Esophagus muscularis mucosa (tissue), 4 donors: ENCODE measurements at regions of chr10 and their contacts with region 1.

Region 1: GRCh38 chr10:92290837-92291615 is at the starts of genes CPEB3 and MARCHF5:
- DNase-seq: peak; percentile 98
- H3K4me3 ChIP-seq: peak within 1 kb of the TSS; percentile 83 to 97 (median 88)
- H3K27ac ChIP-seq: peak within 1 kb of the TSS; percentile 93 to 98 (median 94)
- H3K4me1 ChIP-seq: peaks cover 11 to 45% (median 35%) of the 10 kb centered on the region in 4 donors
- H3K27me3 ChIP-seq: no peaks in the 10 kb centered on the region
- CTCF ChIP-seq: peak; percentile 51 to 78 (median 60)
- EP300 ChIP-seq: peak; percentile 40
- POLR2A ChIP-seq: peak; percentile 56
- total RNA-seq, gene CPEB3: 6.8 to 11.0 (median 10.4) TPM
- total RNA-seq, gene MARCHF5: 12.3 to 18.5 (median 16.7) TPM

Region 2: DNA sequence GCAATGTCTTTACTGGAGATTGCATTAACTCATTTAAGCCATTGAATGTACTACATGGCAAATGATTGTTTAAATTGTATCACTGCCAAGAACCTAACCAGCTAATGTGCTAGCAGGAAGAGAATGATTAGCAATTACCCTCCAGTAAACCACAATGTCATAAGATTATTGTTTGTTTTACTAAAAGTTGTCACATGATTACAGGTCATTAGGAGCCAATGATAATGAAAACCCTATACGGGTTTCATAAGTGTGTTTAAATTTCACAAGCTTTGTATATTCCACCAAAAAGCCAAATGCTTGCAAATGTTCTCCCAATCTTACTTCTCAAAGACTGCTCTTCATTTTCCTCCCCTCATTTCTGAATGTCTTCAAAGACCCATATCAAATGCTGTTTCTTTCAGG is 581.6 kb before region 1 on chr10:
- intact Hi-C with region 1: no loop called
- DNase-seq: no peak
- H3K4me3 ChIP-seq: no peak overlapping the region
- H3K27ac ChIP-seq: no peak overlapping the region
- H3K4me1 ChIP-seq: peaks cover 0 to 32% (median 26%) of the 10 kb centered on the region in 4 donors
- H3K27me3 ChIP-seq: no peaks in the 10 kb centered on the region
- CTCF ChIP-seq: no peak
- EP300 ChIP-seq: no peak
- POLR2A ChIP-seq: no peak

Region 3: DNA sequence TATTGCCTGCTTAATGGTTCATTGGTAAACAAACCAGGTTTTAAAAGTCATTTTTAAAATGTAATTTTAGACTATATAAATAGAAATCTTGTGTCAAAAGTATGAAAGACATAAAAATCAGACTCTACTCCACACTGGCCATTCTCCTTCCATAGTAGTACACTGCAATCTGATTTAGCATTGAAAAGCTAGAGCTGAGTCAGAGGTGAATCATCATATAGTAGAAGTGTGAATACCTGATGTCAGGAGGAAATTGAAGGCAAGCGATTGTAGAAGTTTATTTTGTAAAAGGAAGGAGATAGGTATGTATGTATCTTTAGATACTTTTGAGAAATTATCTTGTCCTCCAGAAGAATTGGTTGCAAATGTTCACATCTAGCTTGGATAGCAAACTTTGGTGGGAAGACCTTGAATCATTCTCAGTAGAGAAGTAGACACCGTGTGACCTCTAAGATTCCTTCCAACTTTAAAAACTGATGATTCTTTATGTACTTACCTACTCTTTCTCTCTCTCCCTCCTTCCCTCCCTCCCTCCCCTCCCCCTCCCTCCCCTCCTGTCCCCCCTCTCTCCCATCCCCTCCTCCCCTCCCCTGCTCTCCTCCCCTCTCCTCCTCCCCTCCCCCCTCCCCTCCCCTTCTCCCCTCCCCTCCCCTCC is 279.3 kb before region 1 on chr10:
- intact Hi-C with region 1: no loop called
- DNase-seq: no peak
- H3K4me3 ChIP-seq: no peak overlapping the region
- H3K27ac ChIP-seq: no peak overlapping the region
- H3K4me1 ChIP-seq: no peaks in the 10 kb centered on the region
- H3K27me3 ChIP-seq: no peaks in the 10 kb centered on the region
- CTCF ChIP-seq: no peak
- EP300 ChIP-seq: no peak
- POLR2A ChIP-seq: no peak

Region 4: GRCh38 chr10:92240289-92241157 is 50.5 kb before region 1 on chr10:
- intact Hi-C with region 1: loop called (anchors 2 kb)
- DNase-seq: no peak
- H3K4me3 ChIP-seq: peak overlapping the region; percentile 72 to 83 (median 76)
- H3K27ac ChIP-seq: peak overlapping the region; percentile 89 to 93 (median 93)
- H3K4me1 ChIP-seq: peaks cover 25 to 75% (median 62%) of the 10 kb centered on the region in 4 donors
- H3K27me3 ChIP-seq: no peaks in the 10 kb centered on the region
- CTCF ChIP-seq: no peak
- EP300 ChIP-seq: no peak
- POLR2A ChIP-seq: no peak

Region 5: GRCh38 chr10:92464364-92464763 is 173.3 kb after region 1 on chr10:
- intact Hi-C with region 1: no loop called
- DNase-seq: no peak
- H3K4me3 ChIP-seq: no peak overlapping the region
- H3K27ac ChIP-seq: no peak overlapping the region
- H3K4me1 ChIP-seq: no peaks in the 10 kb centered on the region
- H3K27me3 ChIP-seq: no peaks in the 10 kb centered on the region
- CTCF ChIP-seq: no peak
- EP300 ChIP-seq: no peak
- POLR2A ChIP-seq: no peak